ENCODE measurements at regions of chr12 and their contacts with region 1.

Region 1: GRCh38 chr12:51923501-51924271 is 16.4 kb downstream of the ACVRL1 start:
- DNase-seq: peak; percentile 39 to 55 (median 48)
- ATAC-seq: peak; percentile 60
- H3K4me3 ChIP-seq: no peak overlapping the region
- H3K27ac ChIP-seq: peak overlapping the region in 2 of 4 donors; percentile 22 to 52
- H3K4me1 ChIP-seq: peaks cover 27% of the 10 kb centered on the region
- H3K27me3 ChIP-seq: no peaks in the 10 kb centered on the region
- CTCF ChIP-seq: peak; percentile 53 to 84 (median 65)
- POLR2A ChIP-seq: no peak

Region 2: GRCh38 chr12:51874013-51874412 is 49.7 kb before region 1 on chr12:
- intact Hi-C with region 1: no loop called
- DNase-seq: no peak
- ATAC-seq: no peak
- H3K4me3 ChIP-seq: no peak overlapping the region
- H3K27ac ChIP-seq: no peak overlapping the region
- H3K4me1 ChIP-seq: peaks cover 9% of the 10 kb centered on the region
- H3K27me3 ChIP-seq: peaks cover 0 to 8% of the 10 kb centered on the region in 2 donors
- CTCF ChIP-seq: no peak
- POLR2A ChIP-seq: no peak

Region 3: GRCh38 chr12:51970904-51971646 is 47.4 kb after region 1 on chr12:
- intact Hi-C with region 1: loop called (anchors 5 kb)
- DNase-seq: no peak
- ATAC-seq: no peak
- H3K4me3 ChIP-seq: no peak overlapping the region
- H3K27ac ChIP-seq: peak overlapping the region in 3 of 4 donors; percentile 21 to 69 (median 35)
- H3K4me1 ChIP-seq: peaks cover 72% of the 10 kb centered on the region
- H3K27me3 ChIP-seq: no peaks in the 10 kb centered on the region
- CTCF ChIP-seq: peak in 5 of 7 experiments; percentile 7 to 29 (median 16)
- POLR2A ChIP-seq: no peak

Region 4: DNA sequence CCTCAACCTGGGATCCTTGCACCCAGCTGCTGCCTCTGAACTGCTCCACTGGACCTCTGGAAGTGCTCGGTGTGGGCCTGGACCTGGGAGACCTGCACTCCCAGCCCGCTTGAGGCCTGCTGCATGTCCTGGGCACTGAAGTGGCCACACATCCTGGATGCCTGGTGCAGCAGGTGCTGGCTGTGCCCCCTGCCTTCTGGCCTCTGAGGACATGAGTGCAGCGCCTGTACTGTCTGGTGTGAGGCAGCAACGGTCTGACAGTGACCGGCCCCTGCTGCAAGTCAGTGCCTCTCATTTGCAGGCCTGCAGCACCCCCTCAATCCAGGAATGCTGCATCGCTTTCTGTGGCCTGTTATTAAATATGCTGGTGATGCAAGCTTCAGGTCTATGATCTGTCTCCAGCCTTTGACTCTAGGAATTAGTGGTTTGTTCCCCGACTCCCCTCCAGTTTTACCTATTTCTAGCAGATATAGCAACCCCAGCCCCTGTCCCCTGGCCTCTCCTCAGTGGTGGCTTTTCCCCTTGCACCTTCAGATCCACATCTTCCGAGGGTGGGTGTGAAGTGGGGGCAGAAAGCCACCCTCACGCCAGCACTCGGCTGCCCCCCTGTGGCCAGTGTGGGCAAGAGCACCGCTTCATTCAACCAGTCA is 159.4 kb after region 1 on chr12:
- intact Hi-C with region 1: no loop called
- DNase-seq: peak; percentile 36 to 58 (median 48)
- ATAC-seq: peak; percentile 62
- H3K4me3 ChIP-seq: no peak overlapping the region
- H3K27ac ChIP-seq: peak overlapping the region in 1 of 4 donors; percentile 46
- H3K4me1 ChIP-seq: no peaks in the 10 kb centered on the region
- H3K27me3 ChIP-seq: no peaks in the 10 kb centered on the region
- CTCF ChIP-seq: peak; percentile 79 to 94 (median 89)
- POLR2A ChIP-seq: no peak

Measured in body of pancreas (tissue), 4 donors.